ENCODE measurements at regions of chr19 and their contacts with region 1.

Region 1: GRCh38 chr19:35716801-35717666 is 769 bp upstream of the KMT2B start:
- DNase-seq: peak; percentile 98
- ATAC-seq: peak; percentile 61
- H3K4me3 Mint-ChIP-seq: peak overlapping the region; percentile 97
- H3K27ac Mint-ChIP-seq: peak overlapping the region; percentile 90
- H3K4me1 Mint-ChIP-seq: peaks cover 41% of the 10 kb centered on the region
- H3K27me3 Mint-ChIP-seq: no peaks in the 10 kb centered on the region

Region 2: DNA sequence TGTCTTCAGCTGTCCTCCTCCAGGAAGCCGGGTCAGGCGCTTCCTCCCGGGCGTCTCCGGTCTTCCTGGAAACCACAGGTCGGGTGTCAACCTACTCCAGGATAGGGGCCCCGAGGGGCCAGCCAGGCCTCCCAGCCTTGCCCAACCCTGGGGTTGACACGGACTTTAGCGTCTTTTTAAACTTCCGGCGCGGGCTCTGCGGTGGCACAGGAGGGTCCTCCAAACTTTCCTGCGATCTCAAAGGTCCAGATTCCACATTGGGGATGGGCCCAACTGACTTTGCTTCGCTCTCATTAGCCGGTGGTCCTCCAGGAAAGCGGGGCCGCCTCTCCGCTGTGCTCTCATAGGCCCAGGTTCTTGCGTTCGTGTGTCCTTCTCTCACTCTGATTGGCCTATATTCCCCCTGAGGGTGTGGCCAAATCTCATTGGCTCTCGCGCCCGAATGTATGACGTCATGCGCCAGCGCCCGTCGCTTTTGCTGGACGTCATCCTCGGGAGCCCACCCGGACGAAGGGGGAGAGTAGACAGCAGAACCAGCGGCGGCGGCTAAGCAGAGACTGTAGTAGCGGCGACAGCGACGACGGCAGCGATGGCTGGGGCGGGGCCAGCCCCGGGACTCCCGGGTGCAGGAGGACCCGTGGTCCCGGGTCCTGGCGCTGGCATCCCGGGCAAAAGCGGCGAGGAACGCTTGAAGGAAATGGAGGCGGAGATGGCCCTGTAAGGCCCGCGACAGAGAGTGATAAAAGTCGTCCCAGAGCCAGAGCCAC is 88.3 kb before region 1 on chr19 and contains the start of gene RBM42:
- CTCF ChIA-PET with region 1: no interaction called
- POLR2A ChIA-PET with region 1: no interaction called
- intact Hi-C with region 1: loop called in 1 of 2 experiments (anchors 1 kb)
- DNase-seq: peak; percentile 97
- ATAC-seq: peak; percentile 100
- H3K4me3 Mint-ChIP-seq: peak within 1 kb of the TSS; percentile 98
- H3K27ac Mint-ChIP-seq: peak within 1 kb of the TSS; percentile 98
- H3K4me1 Mint-ChIP-seq: peaks cover 12% of the 10 kb centered on the region
- H3K27me3 Mint-ChIP-seq: no peaks in the 10 kb centered on the region
- total RNA-seq, gene RBM42: 87.5 to 94.4 TPM

Region 3: DNA sequence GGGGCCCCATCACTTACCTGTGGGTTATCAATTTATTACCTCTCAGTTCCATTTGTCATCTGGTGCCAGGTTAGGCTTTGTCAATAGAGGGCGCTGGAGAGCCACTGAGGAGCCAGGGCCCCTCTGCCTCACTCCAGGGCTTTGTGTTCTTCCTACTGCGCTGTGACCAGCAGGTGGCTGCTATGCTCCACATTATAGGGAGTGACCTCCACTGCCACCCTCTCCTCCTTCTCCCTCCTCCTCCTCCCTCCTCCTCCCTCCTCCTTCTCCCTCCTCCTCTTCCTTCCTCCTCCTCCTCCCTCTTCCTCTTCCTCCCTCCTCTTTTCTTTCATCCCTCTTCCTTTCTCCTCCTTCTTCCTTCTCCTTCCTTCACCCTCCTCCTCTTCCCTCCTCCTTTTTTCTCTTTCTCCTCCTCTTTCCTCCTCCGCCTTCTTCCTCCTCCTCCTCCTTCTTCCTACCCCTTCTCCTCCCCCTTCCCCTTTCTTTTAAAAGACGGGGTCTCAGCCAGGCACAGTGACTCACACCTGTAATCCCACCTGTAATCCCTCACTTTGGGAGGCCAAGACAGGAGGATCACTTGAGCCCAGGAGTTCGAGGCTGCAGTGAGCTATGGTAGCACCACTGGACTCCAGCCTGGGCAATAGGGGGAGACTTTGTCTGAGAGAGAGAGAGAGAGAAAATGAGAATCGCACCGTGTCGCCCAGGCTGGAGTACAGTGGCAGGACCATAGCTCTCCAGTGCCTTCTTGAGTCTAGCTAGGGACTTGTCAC is 23.0 kb before region 1 on chr19:
- CTCF ChIA-PET with region 1: interaction called, 106 read pairs
- POLR2A ChIA-PET with region 1: interaction called, 5 read pairs
- intact Hi-C with region 1: loop called (anchors 1 kb)
- DNase-seq: peak; percentile 95
- ATAC-seq: peak; percentile 97
- H3K4me3 Mint-ChIP-seq: no peak overlapping the region
- H3K27ac Mint-ChIP-seq: peak overlapping the region; percentile 43
- H3K4me1 Mint-ChIP-seq: peaks cover 17% of the 10 kb centered on the region
- H3K27me3 Mint-ChIP-seq: no peaks in the 10 kb centered on the region

Region 4: GRCh38 chr19:35740423-35741202 is 23.6 kb after region 1 on chr19:
- CTCF ChIA-PET with region 1: interaction called, 14 read pairs
- POLR2A ChIA-PET with region 1: interaction called, 10 read pairs
- intact Hi-C with region 1: loop called (anchors 1 kb)
- DNase-seq: peak; percentile 99
- ATAC-seq: peak; percentile 67
- H3K4me3 Mint-ChIP-seq: peak overlapping the region; percentile 82
- H3K27ac Mint-ChIP-seq: peak overlapping the region; percentile 96
- H3K4me1 Mint-ChIP-seq: peaks cover 28% of the 10 kb centered on the region
- H3K27me3 Mint-ChIP-seq: no peaks in the 10 kb centered on the region

Region 5: DNA sequence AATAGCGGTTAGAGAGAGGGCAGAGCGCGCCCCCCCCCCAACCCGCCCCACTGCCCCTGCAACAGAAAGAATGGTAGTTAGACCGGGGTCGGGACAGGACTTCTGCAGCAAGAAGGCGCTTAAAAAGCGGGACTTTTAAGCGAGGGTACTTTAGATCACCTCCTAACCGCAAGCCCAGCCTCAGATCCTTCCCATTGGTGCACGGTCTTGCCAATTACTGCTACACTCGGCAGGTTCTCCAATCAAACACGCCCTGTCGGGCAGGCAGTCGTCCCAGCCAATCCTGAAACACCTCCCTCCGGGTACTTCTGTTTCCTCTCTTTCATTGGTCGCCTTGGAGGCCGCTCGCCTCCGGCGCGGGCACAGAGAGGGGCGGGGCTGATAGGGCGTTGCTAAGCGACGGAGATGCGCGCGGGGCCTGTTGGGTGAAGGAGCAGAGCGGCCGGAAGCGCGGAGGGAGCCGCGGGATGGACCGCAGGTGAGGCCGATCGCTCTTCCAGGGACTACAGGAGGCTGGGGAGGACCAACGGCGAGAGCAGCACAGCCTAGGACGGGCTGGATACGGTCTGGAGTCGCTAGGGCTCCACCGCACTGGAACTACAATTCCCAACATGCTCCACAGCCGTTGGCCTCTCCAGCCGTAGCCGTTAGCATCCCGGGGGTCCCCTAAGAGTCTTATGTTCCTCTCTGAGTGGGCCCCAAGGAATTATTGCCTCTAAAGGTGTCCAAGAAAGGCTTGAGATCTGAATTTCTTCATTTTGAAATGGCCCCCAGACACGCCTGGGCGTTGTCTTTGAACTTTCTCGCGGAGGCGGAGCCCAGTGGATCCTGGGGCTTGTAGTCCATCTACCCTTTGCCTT is 40.9 kb after region 1 on chr19 and contains the start of gene PROSER3:
- CTCF ChIA-PET with region 1: no interaction called
- POLR2A ChIA-PET with region 1: interaction called, 5 read pairs
- intact Hi-C with region 1: loop called (anchors 1 kb)
- DNase-seq: peak; percentile 99
- ATAC-seq: peak; percentile 98
- H3K4me3 Mint-ChIP-seq: peak within 1 kb of the TSS; percentile 85
- H3K27ac Mint-ChIP-seq: peak within 1 kb of the TSS; percentile 91
- H3K4me1 Mint-ChIP-seq: peaks cover 29% of the 10 kb centered on the region
- H3K27me3 Mint-ChIP-seq: peaks cover 4% of the 10 kb centered on the region
- total RNA-seq, gene PROSER3: 39.8 to 62.8 TPM

Region 6: GRCh38 chr19:35797663-35798062 is 80.6 kb after region 1 on chr19:
- CTCF ChIA-PET with region 1: no interaction called
- POLR2A ChIA-PET with region 1: no interaction called
- intact Hi-C with region 1: no loop called
- DNase-seq: peak; percentile 40
- ATAC-seq: peak; percentile 47
- H3K4me3 Mint-ChIP-seq: no peak overlapping the region
- H3K27ac Mint-ChIP-seq: no peak overlapping the region
- H3K4me1 Mint-ChIP-seq: peaks cover 3% of the 10 kb centered on the region
- H3K27me3 Mint-ChIP-seq: peaks cover 25% of the 10 kb centered on the region

Region 7: GRCh38 chr19:35822579-35822978 is 105.5 kb after region 1 on chr19:
- CTCF ChIA-PET with region 1: no interaction called
- POLR2A ChIA-PET with region 1: no interaction called
- intact Hi-C with region 1: loop called in 1 of 2 experiments (anchors 1 kb)
- DNase-seq: no peak
- ATAC-seq: no peak
- H3K4me3 Mint-ChIP-seq: no peak overlapping the region
- H3K27ac Mint-ChIP-seq: no peak overlapping the region
- H3K4me1 Mint-ChIP-seq: peaks cover 3% of the 10 kb centered on the region
- H3K27me3 Mint-ChIP-seq: peaks cover 18% of the 10 kb centered on the region

Region 8: DNA sequence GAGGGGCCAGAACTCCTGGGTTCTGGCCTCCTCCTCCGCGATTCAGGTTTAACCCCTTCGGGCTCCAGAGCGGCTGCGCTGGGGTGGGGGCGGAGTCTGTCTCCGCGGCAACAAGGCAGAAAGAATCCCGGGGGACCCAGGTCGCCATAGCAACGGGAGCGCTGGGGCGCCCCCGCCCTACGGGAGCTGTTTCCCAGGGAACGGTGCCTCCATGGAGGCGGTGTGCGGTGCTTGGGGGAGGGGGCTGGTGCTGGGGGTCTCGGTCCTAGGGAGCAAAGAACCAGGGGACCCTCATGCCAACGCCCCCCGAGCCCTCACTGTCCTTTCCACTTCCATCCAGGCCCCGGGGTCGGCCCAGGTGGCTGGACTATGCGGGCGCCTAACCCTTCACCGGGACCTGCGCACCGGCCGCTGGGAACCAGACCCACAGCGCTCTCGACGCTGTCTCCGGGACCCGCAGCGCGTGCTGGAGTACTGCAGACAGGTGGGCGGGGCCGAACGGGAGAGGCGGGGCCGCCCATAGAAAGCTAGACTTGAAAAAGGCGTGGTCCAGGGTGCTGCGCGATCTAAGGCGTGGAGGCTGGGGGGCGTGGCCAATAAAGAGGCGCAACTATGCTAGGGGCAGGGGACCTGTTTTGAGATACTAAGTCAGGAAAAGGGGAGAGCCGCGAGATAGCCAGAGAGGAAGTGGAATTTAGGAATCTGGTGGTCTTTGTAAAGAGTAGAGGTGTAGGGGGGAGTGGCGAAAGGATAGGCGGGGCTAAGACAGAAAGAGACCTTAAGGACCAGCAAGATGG is 152.5 kb after region 1 on chr19:
- CTCF ChIA-PET with region 1: no interaction called
- POLR2A ChIA-PET with region 1: no interaction called
- intact Hi-C with region 1: no loop called
- DNase-seq: peak; percentile 95
- ATAC-seq: peak; percentile 93
- H3K4me3 Mint-ChIP-seq: peak overlapping the region; percentile 52
- H3K27ac Mint-ChIP-seq: no peak overlapping the region
- H3K4me1 Mint-ChIP-seq: peaks cover 14% of the 10 kb centered on the region
- H3K27me3 Mint-ChIP-seq: peaks cover 37% of the 10 kb centered on the region

Region 9: DNA sequence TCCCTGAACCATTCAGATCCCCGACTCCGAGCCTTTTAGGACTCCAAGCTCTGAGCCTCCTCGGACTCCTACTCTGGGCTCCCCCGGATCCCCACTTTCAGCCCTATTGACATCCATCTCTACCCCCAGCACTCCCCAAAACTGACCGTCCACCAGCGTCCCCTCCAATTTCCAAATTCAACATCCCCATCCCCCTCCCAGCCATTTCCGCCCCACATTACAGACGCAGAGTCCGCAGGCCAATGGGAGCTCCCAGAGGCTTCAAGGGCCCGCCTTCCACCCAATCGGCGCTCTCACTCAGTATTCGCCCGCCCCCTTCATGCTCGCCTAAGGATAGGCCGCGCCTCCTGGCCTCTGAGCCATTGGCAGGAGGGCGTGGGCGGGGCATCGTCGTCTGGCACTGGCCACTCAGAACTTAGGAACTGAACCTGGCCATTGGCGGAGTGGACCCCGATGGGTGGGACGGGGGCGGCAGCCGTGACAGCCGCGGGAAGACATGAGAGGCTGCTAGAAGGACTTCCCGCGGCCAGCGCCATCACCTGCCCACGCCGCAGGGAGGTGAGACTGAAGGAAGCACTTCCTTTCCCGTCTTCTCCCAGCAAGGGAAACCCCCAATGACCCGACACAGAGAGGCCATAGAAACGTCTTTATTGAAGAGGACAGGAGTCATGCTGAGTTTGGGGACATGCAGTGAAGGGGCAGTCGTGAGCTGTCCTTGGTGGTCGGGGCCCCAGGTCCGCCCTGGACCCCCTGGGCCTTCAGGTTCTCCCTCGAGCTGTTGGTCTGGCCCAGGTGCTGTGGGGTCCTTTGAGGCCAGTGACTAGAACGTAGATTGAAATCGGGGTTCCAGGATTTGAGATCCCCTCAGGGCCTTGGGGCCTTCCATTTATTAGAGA is 297.2 kb after region 1 on chr19 and contains the start of gene ALKBH6:
- CTCF ChIA-PET with region 1: no interaction called
- POLR2A ChIA-PET with region 1: interaction called, 3 read pairs
- intact Hi-C with region 1: loop called in 1 of 2 experiments (anchors 5 kb)
- DNase-seq: peak; percentile 100
- ATAC-seq: peak; percentile 98
- H3K4me3 Mint-ChIP-seq: peak within 1 kb of the TSS; percentile 96
- H3K27ac Mint-ChIP-seq: peak within 1 kb of the TSS; percentile 94
- H3K4me1 Mint-ChIP-seq: peaks cover 32% of the 10 kb centered on the region
- H3K27me3 Mint-ChIP-seq: no peaks in the 10 kb centered on the region
- total RNA-seq, gene ALKBH6: 40.6 to 42.2 TPM

Measured in activated CD4-positive, alpha-beta T cell treated with anti-CD3 and anti-CD28 coated beads for 36 hours (primary cell).